ENCODE measurements at regions of chr7 and their contacts with region 1.

Region 1: DNA sequence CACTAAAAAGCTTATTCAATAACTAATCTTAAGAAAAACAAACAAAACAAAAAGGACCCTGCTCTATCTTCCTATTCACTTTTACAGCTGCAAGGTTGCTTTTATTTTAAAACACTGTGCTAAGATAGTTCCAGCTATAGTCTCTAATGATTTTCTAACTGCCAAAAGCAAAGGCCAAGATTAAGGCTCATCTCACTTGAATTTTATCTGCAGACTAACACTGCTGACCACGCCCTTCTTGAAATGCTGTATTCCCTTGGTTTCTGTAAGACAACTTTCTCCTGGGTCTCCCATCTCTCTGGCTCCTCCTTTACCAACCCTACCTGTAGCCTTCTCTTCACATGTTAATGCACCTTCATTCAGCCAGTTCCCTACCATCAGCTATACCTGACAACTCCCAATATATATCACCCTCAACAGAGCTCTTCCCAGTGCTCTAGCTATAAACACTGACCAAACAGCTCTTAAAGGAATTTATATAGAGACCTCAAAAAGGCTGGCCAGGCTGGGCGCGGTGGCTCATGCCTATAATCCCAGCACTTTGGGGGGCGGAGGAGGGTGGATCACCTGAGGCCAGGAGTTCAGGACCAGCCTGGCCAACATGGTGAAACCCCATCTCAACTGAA is 11.7 kb downstream of the SRPK2 start:
- DNase-seq: no peak
- ATAC-seq: no peak
- H3K4me3 ChIP-seq: no peak overlapping the region
- H3K27ac ChIP-seq: no peak overlapping the region
- H3K4me1 ChIP-seq: peaks cover 5% of the 10 kb centered on the region; the same call in 1 of the 3 replicates
- CTCF ChIP-seq: no peak
- EP300 ChIP-seq: no peak
- POLR2A ChIP-seq: no peak
- RAD21 ChIP-seq: no peak

Region 2: GRCh38 chr7:105352018-105352612 is 24.9 kb before region 1 on chr7:
- CTCF ChIA-PET with region 1: no interaction called
- POLR2A ChIA-PET with region 1: no interaction called
- DNase-seq: no peak
- ATAC-seq: peak; percentile 68 to 71
- H3K4me3 ChIP-seq: no peak overlapping the region
- H3K27ac ChIP-seq: peak overlapping the region in 1 of 2 experiments; percentile 64; a peak in 3 of 6 replicates
- H3K4me1 ChIP-seq: peaks cover 21% of the 10 kb centered on the region
- CTCF ChIP-seq: no peak
- EP300 ChIP-seq: no peak
- POLR2A ChIP-seq: no peak
- RAD21 ChIP-seq: no peak

Region 3: GRCh38 chr7:105365541-105366534 is 11.2 kb before region 1 on chr7:
- CTCF ChIA-PET with region 1: interaction called, 10 read pairs
- POLR2A ChIA-PET with region 1: no interaction called
- DNase-seq: no peak
- ATAC-seq: no peak
- H3K4me3 ChIP-seq: no peak overlapping the region
- H3K27ac ChIP-seq: no peak overlapping the region; a peak in 1 of 6 replicates
- H3K4me1 ChIP-seq: peaks cover 32% of the 10 kb centered on the region
- CTCF ChIP-seq: no peak
- EP300 ChIP-seq: no peak
- POLR2A ChIP-seq: no peak
- RAD21 ChIP-seq: no peak

Region 4: DNA sequence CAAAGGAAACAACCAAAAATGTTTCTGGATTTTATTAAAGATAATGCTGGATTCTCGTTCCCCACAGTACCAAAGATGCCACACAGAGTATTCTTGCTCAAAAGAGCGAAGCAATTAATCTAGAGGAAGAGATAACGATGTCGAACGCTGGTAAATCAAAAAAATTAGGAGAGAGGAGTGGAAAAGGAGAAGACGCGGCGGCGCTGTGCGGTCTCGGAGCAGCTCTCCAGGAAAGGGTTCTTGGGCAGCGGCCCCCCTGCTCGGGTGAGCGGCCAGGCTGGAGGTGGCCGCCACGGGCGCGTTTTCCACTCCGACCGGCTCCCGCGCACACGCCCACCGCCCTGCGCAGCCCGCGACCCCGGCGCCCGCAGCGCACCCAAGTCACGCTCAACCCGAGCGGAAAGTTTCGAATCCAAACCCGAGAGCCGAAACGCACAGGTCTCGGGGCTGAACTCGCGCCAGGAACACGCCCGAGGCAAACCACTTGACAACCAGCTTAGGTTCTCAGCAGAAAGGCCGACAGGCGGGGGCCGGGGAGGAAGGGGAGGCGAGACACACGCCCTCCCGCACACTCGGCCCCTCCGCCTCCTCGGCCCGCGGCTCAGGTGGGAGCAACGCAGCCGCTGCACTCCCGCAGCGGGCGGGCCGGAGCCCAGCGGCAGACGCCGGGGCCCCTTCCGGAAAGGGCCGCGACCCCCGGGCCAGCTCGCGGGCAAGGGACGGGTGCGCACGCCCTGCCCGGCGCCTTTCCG is 10.8 kb after region 1 on chr7:
- CTCF ChIA-PET with region 1: interaction called, 5 read pairs
- POLR2A ChIA-PET with region 1: interaction called, 13 read pairs
- DNase-seq: peak; percentile 55 to 71
- ATAC-seq: peak; percentile 68 to 79
- H3K4me3 ChIP-seq: peak overlapping the region; percentile 89
- H3K27ac ChIP-seq: peak overlapping the region; percentile 90 to 98
- H3K4me1 ChIP-seq: peaks cover 13% of the 10 kb centered on the region
- CTCF ChIP-seq: no peak; the same call in 2 of the 3 replicates
- EP300 ChIP-seq: no peak
- POLR2A ChIP-seq: no peak
- RAD21 ChIP-seq: no peak